ENCODE measurements at regions of chr6 and their contacts with region 1.

Region 1: DNA sequence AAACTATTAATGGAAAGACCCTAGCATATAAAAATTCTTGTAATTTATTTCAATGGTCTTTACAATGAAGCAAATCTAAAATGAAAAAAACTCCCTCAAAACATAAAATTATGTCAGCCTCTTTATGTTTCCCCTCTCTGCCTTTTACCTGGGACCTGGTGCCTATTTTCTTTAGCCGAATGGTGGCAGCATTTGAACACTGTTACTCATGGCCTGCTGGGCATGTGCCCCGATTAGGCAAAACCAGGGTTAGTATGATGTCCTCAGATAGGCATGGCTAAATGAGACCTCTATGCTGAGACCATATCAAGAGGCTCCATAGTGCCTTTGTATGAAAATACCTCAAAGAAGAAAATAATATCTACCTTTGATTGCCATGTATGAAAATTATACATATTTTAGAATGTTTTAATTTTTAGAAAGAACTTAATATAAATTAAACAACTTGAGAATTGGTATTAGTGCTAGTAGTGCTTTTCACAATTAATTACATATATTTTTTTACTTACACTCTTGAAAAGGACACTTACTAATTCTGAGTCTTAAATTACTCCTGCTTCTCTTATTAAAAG is 22.5 kb upstream of the C6orf58 start:
- DNase-seq: peak; percentile 61
- H3K4me3 ChIP-seq: no peak overlapping the region
- H3K27ac ChIP-seq: no peak overlapping the region
- H3K4me1 ChIP-seq: no peaks in the 10 kb centered on the region
- H3K27me3 ChIP-seq: no peaks in the 10 kb centered on the region
- CTCF ChIP-seq: peak; percentile 64

Region 2: GRCh38 chr6:127641905-127642304 is 87.4 kb after region 1 on chr6:
- CTCF ChIA-PET with region 1: interaction called, 6 read pairs
- POLR2A ChIA-PET with region 1: no interaction called
- intact Hi-C with region 1: loop called (anchors 1 kb)
- DNase-seq: peak; percentile 62
- H3K4me3 ChIP-seq: no peak overlapping the region
- H3K27ac ChIP-seq: no peak overlapping the region
- H3K4me1 ChIP-seq: no peaks in the 10 kb centered on the region
- H3K27me3 ChIP-seq: no peaks in the 10 kb centered on the region
- CTCF ChIP-seq: peak; percentile 78

Region 3: GRCh38 chr6:127686084-127686483 is 131.6 kb after region 1 on chr6:
- CTCF ChIA-PET with region 1: no interaction called
- POLR2A ChIA-PET with region 1: no interaction called
- intact Hi-C with region 1: loop called (anchors 5 kb)
- DNase-seq: peak; percentile 2
- H3K4me3 ChIP-seq: no peak overlapping the region
- H3K27ac ChIP-seq: no peak overlapping the region
- H3K4me1 ChIP-seq: no peaks in the 10 kb centered on the region
- H3K27me3 ChIP-seq: no peaks in the 10 kb centered on the region
- CTCF ChIP-seq: no peak

Region 4: GRCh38 chr6:128305228-128305627 is 750.7 kb after region 1 on chr6:
- CTCF ChIA-PET with region 1: no interaction called
- POLR2A ChIA-PET with region 1: no interaction called
- intact Hi-C with region 1: no loop called
- DNase-seq: no peak
- H3K4me3 ChIP-seq: no peak overlapping the region
- H3K27ac ChIP-seq: no peak overlapping the region
- H3K4me1 ChIP-seq: peaks cover 6% of the 10 kb centered on the region
- H3K27me3 ChIP-seq: no peaks in the 10 kb centered on the region
- CTCF ChIP-seq: no peak